Dendritic cell treated with granulocyte-macrophage colony-stimulating factor and Interleukin-4, amounts not matched to agents 40 ng/mL and 50 ng/mL, for 4 days (primary cell): ENCODE measurements at regions of chr1 and their contacts with region 1.

Region 1: DNA sequence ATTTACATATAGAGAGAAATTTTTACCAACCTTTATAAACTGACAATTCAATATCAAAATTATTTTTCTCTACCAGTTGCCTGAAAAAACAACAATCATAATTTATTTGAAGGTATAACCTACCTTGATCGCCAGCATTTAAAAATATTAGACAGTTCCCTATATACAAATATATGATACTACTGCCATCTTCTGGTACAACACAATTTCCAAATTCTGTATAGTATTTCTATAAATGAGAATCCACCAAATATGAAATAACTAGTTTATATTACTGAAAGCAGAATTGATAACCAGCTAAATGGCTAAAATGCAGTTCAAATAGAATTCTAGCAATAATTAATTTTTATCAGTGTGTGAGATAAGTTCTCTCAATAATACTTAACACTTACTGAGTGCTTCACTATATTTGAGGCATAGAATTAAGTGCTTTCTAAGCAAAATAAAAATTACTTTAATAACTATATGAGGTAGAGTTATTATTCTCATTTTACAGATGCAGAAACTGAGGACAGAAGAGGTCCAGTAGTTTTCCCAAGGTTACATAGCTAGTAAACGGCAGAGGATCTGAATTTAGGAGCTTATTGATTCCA is 75.6 kb downstream of the PIGK start:
- H3K4me3 Mint-ChIP-seq: no peak overlapping the region
- H3K27ac Mint-ChIP-seq: no peak overlapping the region
- H3K4me1 Mint-ChIP-seq: no peaks in the 10 kb centered on the region
- H3K27me3 Mint-ChIP-seq: peaks cover 10% of the 10 kb centered on the region

Region 2: GRCh38 chr1:75991497-75992114 is 1152.0 kb before region 1 on chr1:
- intact Hi-C with region 1: loop called (anchors 5 kb)
- H3K4me3 Mint-ChIP-seq: no peak overlapping the region
- H3K27ac Mint-ChIP-seq: no peak overlapping the region
- H3K4me1 Mint-ChIP-seq: no peaks in the 10 kb centered on the region
- H3K27me3 Mint-ChIP-seq: no peaks in the 10 kb centered on the region

Region 3: GRCh38 chr1:76154206-76154956 is 989.2 kb before region 1 on chr1:
- intact Hi-C with region 1: loop called (anchors 1 kb)
- H3K4me3 Mint-ChIP-seq: peak overlapping the region; percentile 78
- H3K27ac Mint-ChIP-seq: peak overlapping the region; percentile 85
- H3K4me1 Mint-ChIP-seq: peaks cover 8% of the 10 kb centered on the region
- H3K27me3 Mint-ChIP-seq: no peaks in the 10 kb centered on the region

Region 4: DNA sequence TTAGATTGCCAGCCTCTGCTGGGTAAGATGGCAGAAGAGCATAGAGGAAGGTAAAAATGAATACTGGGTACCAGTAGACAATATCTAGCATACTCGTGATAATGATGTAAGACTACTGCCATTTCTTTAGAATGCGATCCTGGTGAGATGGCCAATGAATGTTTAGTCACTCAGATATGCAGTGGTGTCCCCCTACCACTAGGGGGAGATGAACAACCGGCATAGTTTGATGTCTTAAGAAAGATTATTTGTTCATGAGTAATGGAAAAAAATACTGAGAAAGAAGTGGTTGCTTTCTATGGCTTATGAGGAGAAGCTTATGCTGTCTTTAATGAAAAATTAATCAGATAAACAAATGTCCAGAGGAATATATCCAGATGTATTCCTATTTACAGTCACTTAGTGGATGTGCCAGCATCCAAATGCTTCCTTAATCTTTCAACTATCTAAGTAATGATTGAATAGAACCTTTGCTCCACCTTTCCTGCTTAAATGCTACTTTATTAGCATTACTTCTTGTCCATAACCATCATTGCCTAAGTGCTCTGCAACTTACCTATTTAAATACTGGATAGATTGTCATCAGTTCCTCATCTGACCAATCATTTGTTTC is 812.5 kb before region 1 on chr1:
- intact Hi-C with region 1: loop called (anchors 5 kb)
- H3K4me3 Mint-ChIP-seq: no peak overlapping the region
- H3K27ac Mint-ChIP-seq: no peak overlapping the region
- H3K4me1 Mint-ChIP-seq: no peaks in the 10 kb centered on the region
- H3K27me3 Mint-ChIP-seq: no peaks in the 10 kb centered on the region

Region 5: DNA sequence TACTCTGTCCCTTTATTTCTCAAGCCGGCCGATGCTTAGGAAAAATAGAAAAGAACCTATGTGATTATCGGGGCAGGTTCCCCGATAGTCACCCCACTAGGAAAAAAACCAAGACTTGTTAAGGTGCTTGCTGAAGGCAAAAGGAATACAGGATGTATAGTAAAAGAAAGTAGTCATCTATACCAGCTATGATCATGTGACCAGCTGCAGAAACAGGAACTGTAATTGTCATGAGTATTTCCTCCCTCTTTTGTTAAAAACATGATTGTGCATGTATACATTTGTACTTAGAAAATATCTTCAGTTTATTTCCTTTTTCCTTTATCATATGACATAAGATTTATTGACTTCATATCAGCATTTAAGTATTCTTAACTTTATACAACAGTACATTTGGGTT is 45.1 kb after region 1 on chr1:
- intact Hi-C with region 1: no loop called
- H3K4me3 Mint-ChIP-seq: no peak overlapping the region
- H3K27ac Mint-ChIP-seq: no peak overlapping the region
- H3K4me1 Mint-ChIP-seq: peaks cover 15% of the 10 kb centered on the region
- H3K27me3 Mint-ChIP-seq: no peaks in the 10 kb centered on the region

Region 6: GRCh38 chr1:77533660-77534305 is 390.2 kb after region 1 on chr1:
- intact Hi-C with region 1: loop called (anchors 1 kb)
- H3K4me3 Mint-ChIP-seq: no peak overlapping the region
- H3K27ac Mint-ChIP-seq: no peak overlapping the region
- H3K4me1 Mint-ChIP-seq: peaks cover 16% of the 10 kb centered on the region
- H3K27me3 Mint-ChIP-seq: no peaks in the 10 kb centered on the region

Region 7: DNA sequence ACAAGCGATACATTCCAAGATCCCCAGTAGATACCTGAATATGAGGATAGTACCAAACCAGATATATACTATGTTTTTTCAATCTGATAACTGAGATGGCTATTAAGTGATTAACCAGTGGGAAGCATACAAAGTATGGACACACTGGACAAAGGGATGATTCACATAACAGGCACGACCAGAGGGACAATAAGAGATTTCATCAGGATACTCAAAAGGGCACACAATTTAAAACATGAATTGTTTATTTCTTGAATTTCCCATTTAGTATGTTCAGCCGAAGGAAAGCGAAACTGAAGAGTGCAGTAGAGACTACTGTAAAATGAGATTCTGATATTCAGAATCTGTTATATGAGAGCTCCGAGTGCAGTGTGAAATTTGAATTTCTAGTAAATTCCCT is 528.2 kb after region 1 on chr1:
- intact Hi-C with region 1: loop called (anchors 10 kb)
- H3K4me3 Mint-ChIP-seq: no peak overlapping the region
- H3K27ac Mint-ChIP-seq: no peak overlapping the region
- H3K4me1 Mint-ChIP-seq: peaks cover 10% of the 10 kb centered on the region
- H3K27me3 Mint-ChIP-seq: no peaks in the 10 kb centered on the region

Region 8: DNA sequence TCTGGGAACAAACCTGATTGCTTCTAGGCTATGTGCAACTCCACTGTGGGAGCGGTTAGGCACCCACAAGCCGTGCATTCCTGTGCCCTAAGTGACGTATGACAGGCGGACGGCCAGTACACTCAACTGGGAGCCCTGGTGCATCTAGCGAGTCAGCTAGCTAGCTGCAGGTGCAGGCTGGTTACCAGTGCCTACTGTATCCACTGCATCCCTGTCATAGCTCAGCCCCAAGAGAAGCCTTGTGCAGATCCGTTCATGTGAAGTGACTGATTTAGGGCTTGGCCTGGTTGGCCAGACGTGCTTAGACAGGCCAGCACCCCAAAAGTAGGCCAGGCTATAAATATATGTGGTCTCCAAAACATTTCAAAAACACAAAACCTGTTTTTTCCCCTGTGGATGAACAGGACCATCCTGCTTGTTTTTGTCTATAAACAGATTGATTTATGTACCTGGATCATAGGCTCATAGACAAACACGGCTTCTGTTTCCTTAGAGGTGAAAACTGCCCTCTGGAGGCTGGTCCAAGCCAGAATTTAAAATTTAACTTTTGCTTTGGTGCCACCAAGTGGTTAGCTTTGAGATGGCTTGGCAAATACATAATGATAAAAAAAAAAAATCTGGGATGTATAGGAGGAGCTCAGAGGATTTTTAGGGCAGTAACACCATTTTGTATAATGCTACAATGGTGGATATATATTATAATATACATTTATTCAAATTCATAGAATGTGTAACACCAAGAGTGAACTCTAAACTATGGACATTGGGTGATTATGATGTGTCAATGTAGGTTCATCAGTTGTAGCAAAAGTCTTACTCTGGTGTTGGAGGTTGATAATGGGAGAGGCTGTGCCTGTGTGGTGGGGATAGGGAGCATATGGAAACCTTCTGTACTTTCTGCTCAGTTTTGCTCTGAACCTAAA is 970.7 kb after region 1 on chr1:
- intact Hi-C with region 1: loop called (anchors 5 kb)
- H3K4me3 Mint-ChIP-seq: no peak overlapping the region
- H3K27ac Mint-ChIP-seq: no peak overlapping the region
- H3K4me1 Mint-ChIP-seq: no peaks in the 10 kb centered on the region
- H3K27me3 Mint-ChIP-seq: no peaks in the 10 kb centered on the region